Heart right ventricle (tissue), 16 donors: ENCODE measurements at regions of chr22 and their contacts with region 1.

Region 1: DNA sequence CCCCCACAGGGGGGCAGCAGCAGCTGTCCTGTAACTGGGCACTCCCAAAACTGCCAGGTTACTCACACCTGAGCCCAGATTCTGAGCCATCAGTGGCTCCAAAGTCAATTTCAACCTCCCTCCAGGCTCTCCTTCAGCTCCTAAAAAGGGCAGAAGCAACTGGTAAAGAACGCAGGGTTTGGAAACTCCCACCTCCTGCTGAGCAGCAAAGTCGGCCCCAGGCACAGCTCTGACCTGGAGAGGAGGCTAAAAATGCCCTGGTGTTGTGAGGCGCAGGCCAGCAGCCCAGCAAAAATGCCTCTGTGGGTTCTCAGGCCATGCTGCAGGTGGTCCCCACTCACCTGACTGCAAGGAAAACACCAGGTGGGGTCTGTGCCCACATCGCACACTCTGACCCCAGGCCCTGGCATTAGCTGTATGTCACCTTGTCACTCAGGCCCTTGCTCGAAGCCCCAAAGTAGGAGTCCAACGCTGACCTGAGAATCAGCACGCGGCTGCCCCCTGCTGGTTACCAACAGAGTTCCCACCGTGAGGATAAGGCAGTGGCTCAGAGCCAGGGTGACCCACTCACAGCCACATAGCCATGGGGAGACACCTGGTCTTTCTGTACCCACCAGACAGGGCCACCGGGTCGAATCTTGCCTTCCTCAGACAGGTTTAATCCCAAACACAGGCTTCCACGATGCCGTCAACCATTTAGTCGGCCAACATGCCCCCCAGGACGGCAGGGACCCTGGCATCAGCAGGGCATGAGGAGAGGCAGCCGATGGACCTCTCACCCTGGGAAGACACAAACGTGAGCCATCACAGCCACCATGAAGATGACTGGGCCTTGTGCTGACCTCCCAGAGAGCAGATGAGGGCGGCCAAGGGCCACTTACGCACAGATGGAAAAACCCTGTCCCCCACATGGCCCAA is 11.1 kb downstream of the POLR3H start:
- DNase-seq: peak; percentile 74 to 84
- ATAC-seq: peak; percentile 40 to 78 (median 70)
- H3K4me3 ChIP-seq: no peak overlapping the region
- H3K27ac ChIP-seq: peak overlapping the region in 8 of 10 donors; percentile 30 to 78 (median 66)
- H3K4me1 ChIP-seq: peaks cover 0 to 31% (median 20%) of the 10 kb centered on the region in 9 donors
- H3K27me3 ChIP-seq: no peaks in the 10 kb centered on the region
- CTCF ChIP-seq: peak; percentile 70 to 84 (median 81)

Region 2: DNA sequence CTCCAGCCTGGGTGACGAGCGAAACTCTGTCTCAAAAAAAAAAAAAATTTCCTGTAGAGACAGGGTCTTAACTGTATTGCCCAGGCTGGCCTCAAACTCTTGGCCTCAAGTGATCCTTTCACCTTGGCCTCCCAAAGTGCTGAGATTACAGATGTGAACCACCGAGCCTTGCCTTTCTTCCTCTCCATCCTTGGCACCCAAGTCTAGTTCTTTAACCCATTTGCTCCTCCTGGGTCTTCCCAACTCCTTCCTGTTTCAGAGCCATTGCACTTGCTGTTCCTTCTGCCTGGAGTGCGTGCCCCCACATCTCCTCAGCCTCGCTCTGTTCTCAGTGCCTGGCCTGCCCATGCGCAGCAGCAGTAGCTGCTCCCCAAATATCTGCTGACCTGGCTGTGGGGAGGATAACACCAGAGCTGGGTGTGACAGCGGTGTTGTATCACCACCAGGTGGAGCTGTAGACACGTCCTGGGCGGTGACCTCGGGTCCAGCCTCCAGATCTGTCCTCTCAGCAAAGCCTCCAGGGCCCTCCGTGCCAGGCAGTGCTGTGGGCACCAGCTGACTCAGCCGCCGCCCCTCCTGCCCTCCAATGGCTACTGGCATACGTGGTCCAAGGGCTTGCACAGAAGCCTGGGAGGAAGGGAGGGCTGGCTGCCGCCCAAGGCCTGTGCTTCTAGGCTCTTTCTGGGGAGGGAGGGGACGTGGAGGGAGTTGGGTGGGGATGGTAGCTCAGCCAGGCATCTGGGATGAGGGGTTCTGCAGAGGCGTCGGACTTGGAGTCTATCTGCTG is 129.4 kb before region 1 on chr22:
- intact Hi-C with region 1: loop called in 3 of 10 experiments (anchors 5 kb)
- DNase-seq: peak; percentile 91
- ATAC-seq: peak; percentile 85 to 94 (median 91)
- H3K4me3 ChIP-seq: peak overlapping the region in 1 of 10 donors; percentile 20
- H3K27ac ChIP-seq: peak overlapping the region in 7 of 10 donors; percentile 35 to 82 (median 77)
- H3K4me1 ChIP-seq: peaks cover 0 to 28% (median 24%) of the 10 kb centered on the region in 9 donors
- H3K27me3 ChIP-seq: no peaks in the 10 kb centered on the region
- CTCF ChIP-seq: peak; percentile 95 to 98 (median 98)

Region 3: DNA sequence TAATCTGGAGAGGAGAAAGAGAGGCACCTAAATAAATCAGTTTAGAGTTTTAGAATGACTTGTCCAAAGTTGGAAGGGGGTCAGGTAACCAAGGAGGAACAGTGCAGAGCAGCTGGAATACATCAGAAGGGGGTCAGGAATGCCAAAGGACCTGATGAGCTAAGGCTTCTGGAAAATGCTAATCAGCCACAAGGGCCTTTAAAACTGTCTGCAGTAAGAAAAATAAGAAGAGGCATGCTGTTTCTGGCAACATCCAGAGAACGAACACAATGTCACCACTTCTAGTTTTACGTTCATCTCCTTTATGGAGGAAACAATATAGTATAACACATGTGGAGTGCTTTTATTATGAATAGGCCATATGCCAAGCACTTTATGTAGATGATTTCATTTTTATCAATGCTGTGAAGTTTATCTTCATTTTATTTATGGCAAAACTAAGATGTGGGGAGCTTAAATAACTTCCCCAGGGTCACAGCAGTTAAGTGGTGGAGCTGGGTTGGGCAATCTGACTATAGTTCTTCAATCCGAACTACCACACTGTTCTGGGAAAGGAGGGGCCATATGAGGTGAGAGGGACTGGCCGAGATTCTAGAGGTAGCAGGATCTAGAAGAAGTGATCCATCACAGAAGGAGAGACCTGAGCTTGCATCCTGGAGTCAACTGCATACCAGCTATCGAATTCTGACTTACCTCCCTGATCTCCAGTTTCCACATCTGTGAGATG is 41.6 kb before region 1 on chr22:
- intact Hi-C with region 1: no loop called
- DNase-seq: no peak
- ATAC-seq: peak in 3 of 8 donors; percentile 28 to 52 (median 43)
- H3K4me3 ChIP-seq: no peak overlapping the region
- H3K27ac ChIP-seq: peak overlapping the region in 9 of 10 donors; percentile 4 to 74 (median 57)
- H3K4me1 ChIP-seq: peaks cover 19 to 99% (median 84%) of the 10 kb centered on the region in 9 donors
- H3K27me3 ChIP-seq: no peaks in the 10 kb centered on the region
- CTCF ChIP-seq: no peak